ENCODE measurements at regions of chr2 and their contacts with region 1.

Region 1: DNA sequence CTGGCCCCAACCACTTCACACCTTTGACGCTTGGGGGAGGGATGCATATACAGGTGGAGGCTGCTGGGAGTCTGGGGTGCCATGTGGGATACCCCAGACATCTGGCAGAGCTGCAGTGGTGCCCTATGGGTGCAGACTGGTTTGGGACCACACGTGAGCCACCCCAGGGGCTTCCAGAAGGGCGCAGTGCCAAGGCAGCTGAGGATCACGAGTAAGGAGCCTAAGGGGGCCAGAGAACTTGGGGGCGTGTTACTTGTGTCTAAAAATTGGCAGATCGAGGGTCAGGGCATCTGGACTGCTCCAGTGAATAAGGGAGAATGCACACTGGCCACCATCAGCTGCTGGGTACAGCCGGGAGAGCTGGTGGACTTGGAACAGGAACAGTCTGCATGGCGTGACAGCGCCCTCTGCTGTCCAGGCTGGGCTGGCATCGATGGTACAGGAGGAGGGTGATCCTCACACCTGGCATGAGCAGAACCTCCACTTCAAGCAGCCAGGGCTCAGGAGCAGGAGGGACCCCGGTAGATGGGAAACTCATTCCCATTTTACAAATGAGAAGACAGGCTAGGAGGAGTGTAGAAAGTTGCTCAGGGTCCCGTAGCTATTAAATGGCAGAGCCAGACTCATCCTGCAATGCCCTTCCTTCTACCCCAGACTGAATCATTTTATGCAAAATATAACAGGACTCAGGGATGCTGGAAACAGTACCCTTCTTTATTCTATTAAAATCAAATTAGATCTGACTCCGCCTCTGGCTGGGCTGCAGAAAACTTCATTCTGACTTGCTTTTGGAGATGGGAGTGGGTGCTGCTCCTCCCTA is 60.4 kb downstream of the ATOH8 start:
- DNase-seq: peak; percentile 89
- H3K4me3 ChIP-seq: no peak overlapping the region
- H3K27ac ChIP-seq: no peak overlapping the region
- H3K4me1 ChIP-seq: peaks cover 20% of the 10 kb centered on the region
- H3K27me3 ChIP-seq: no peaks in the 10 kb centered on the region

Region 2: GRCh38 chr2:84486441-84487115 is 1327.6 kb before region 1 on chr2:
- in situ Hi-C with region 1: no loop called
- DNase-seq: peak; percentile 43
- H3K4me3 ChIP-seq: no peak overlapping the region
- H3K27ac ChIP-seq: peak overlapping the region; percentile 38; the same call in 1 of the 2 replicates
- H3K4me1 ChIP-seq: peaks cover 28% of the 10 kb centered on the region
- H3K27me3 ChIP-seq: no peaks in the 10 kb centered on the region

Region 3: DNA sequence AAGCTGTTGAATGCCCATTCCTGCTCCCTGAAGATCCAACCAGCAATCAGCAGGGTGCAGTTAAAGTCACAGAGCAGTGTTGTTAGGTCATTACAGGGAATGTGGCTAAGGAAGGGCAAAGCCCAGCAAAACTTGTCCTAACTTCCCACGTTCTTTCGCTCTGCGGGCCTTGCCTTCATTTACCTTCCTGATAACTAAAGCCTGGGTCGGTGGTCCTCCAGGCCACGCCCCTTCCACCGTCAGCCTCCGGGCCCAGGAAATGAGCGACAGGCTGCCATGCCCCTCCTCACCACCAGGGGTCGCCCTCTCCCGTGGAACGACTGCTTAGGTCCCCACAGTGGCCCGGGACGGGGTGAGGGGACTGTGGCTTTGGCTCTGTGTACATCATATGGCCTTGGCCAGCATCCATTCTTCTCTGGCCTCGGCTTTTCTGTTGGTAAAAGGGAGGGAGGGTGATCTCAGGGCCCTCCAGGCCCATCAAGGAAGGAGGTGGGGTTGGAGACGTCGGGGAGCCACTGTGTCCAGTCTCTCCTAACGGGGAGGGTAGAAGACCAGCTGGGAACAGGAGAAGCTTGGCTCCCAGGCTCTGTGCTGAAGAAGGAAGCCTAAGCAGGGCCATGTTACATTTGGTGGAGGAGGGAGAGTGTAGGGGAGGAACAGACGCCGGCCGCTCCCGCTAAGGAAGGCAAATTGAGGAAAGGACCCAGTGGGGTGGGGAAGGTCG is 393.5 kb before region 1 on chr2:
- in situ Hi-C with region 1: no loop called
- DNase-seq: peak; percentile 76
- H3K4me3 ChIP-seq: peak overlapping the region; percentile 36
- H3K27ac ChIP-seq: peak overlapping the region; percentile 22
- H3K4me1 ChIP-seq: peaks cover 20% of the 10 kb centered on the region
- H3K27me3 ChIP-seq: no peaks in the 10 kb centered on the region

Region 4: GRCh38 chr2:85648619-85649018 is 165.6 kb before region 1 on chr2:
- in situ Hi-C with region 1: loop called (anchors 10 kb)
- DNase-seq: peak; percentile 80
- H3K4me3 ChIP-seq: no peak overlapping the region
- H3K27ac ChIP-seq: peak overlapping the region; percentile 75
- H3K4me1 ChIP-seq: peaks cover 40% of the 10 kb centered on the region
- H3K27me3 ChIP-seq: no peaks in the 10 kb centered on the region

Region 5: GRCh38 chr2:85728883-85729824 is 85.0 kb before region 1 on chr2:
- in situ Hi-C with region 1: loop called (anchors 5 kb)
- DNase-seq: peak; percentile 91
- H3K4me3 ChIP-seq: no peak overlapping the region
- H3K27ac ChIP-seq: no peak overlapping the region
- H3K4me1 ChIP-seq: peaks cover 11% of the 10 kb centered on the region
- H3K27me3 ChIP-seq: no peaks in the 10 kb centered on the region